Activated naive CD4-positive, alpha-beta T cell treated with anti-CD3 and anti-CD28 coated beads, Interleukin-2, amount 10 ng/mL, durations not matched to agents 7 days and 5 days (primary cell): ENCODE measurements at regions of chr9 and their contacts with region 1.

Region 1: GRCh38 chr9:32378993-32379729 is 5.3 kb upstream of the ACO1 start:
- DNase-seq: peak; percentile 66
- H3K4me3 Mint-ChIP-seq: no peak overlapping the region
- H3K27ac Mint-ChIP-seq: no peak overlapping the region
- H3K4me1 Mint-ChIP-seq: peaks cover 16% of the 10 kb centered on the region
- H3K27me3 Mint-ChIP-seq: peaks cover 41% of the 10 kb centered on the region

Region 2: DNA sequence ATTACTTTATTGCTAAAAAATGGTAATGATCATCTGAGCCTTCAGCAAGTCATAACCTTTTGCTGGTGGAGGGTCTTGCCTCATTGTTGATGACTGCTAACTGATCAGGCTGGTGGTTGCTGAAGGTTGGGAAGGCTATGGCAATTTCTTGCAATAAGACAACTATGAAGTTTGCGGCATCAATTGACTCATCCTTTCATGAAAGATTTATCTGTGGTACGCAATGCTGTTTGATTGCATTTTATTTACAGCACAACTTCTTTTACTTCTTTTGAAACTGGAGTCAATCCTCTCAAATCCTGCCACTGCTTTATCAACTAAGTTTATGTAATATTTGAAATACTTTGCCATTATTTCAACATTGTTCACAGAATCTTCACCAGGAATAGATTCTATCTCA is 53.0 kb before region 1 on chr9:
- CTCF ChIA-PET with region 1: no interaction called
- DNase-seq: no peak
- H3K4me3 Mint-ChIP-seq: no peak overlapping the region
- H3K27ac Mint-ChIP-seq: no peak overlapping the region
- H3K4me1 Mint-ChIP-seq: no peaks in the 10 kb centered on the region
- H3K27me3 Mint-ChIP-seq: no peaks in the 10 kb centered on the region

Region 3: DNA sequence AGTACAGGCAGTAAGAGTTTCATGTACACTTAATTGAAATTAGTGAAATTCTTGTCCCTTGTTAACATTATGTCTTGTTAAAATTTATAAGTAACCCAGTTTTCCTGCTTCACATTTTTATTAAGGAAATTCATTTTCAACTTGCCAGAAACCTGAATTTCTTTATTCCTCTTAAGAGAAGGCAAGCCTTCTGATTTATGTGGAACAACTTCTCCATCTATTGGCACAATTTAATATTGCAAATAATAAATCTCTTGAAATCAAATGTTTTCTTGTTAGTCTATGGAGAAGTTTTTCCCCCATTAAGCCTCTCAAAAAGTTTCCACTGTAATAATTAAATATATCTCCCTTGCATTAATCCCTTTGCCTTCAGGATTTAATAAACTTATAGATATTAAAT is 28.5 kb before region 1 on chr9:
- CTCF ChIA-PET with region 1: no interaction called
- DNase-seq: no peak
- H3K4me3 Mint-ChIP-seq: no peak overlapping the region
- H3K27ac Mint-ChIP-seq: no peak overlapping the region
- H3K4me1 Mint-ChIP-seq: no peaks in the 10 kb centered on the region
- H3K27me3 Mint-ChIP-seq: no peaks in the 10 kb centered on the region

Region 4: DNA sequence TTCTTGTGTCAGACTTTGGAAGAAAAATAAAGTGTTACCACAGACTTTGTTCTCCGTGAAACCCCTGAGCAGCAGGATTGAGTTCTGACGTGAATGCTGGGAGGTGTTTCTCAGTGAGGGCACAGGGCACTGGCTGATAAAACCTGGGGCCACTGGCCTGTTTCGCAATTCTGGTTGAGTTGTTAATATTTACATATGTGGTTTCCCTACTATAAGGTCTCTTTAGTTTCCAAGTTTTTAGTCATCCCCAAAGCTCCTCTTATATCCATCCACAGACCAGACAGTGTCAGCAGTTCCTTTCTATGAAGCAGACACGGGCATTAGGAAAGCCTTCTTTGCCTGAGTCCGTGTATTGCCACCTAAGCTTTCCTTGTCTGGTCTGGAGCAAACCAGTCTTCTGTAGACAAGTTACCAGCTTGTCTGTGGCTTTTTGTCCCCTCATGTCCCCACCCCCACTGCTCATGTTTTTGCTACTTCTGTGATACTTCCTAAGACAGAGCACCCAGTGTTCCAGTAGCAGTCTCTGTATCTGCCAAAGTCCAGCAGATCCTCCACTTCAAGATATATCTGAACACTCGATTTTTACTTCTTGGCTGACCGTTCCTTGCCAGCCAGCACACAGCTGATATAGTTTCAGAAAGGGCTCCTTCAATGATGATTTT is 47.2 kb after region 1 on chr9:
- CTCF ChIA-PET with region 1: interaction called, 41 read pairs
- DNase-seq: no peak
- H3K4me3 Mint-ChIP-seq: no peak overlapping the region
- H3K27ac Mint-ChIP-seq: no peak overlapping the region
- H3K4me1 Mint-ChIP-seq: peaks cover 5% of the 10 kb centered on the region
- H3K27me3 Mint-ChIP-seq: no peaks in the 10 kb centered on the region

Region 5: DNA sequence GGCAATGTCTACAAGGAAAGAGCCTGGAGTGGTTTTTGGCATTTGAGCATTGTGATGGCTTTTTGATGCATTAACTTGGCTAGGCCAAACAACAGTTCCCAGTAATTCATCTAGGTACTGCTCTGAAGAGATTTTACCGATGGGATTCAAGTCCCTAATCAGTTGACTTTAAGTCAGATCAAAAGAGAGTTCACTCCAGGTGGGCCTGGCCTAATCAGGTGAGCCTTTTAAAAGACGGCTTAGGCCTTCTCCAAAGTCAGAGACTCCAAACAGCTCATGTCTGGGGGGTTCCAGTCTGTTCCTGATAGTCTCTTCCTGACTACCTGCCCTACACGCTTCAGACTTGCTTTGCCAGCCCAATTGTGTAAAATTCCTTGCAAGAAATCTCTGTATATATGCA is 93.2 kb after region 1 on chr9:
- CTCF ChIA-PET with region 1: no interaction called
- DNase-seq: no peak
- H3K4me3 Mint-ChIP-seq: no peak overlapping the region
- H3K27ac Mint-ChIP-seq: no peak overlapping the region
- H3K4me1 Mint-ChIP-seq: no peaks in the 10 kb centered on the region
- H3K27me3 Mint-ChIP-seq: no peaks in the 10 kb centered on the region

Region 6: DNA sequence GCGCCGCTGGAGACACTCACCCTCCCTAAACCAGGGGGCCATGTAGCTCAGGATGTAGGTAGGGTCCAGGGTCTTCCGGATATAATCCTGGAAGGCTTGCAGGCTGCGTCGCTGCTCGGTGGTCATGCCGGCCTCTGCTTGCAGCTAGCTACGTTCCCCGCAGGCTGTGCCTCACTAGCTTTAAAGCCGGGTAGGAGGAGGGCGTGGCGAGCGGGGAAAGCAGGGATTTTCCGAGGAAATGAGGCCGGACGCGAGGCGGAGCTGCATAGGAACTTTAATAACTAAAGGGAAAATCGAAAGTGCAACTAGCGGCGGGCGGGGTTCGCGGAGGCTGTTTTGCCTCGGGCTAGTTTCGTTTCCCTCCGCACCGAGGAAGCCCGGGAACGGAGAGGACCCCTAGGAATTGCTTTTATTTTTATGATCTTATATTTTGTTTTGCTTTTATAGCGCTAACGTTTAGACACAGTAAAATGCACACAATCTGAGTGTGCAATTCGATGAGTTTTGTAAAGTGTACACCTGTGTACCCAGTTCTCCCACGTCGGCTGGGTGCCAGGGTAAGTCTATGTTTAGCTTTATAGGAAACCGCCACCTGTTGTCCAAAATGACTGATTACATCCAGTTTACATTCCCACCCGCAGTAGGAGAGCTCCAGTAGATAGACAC is 147.0 kb after region 1 on chr9 and contains the start of gene RIGI:
- CTCF ChIA-PET with region 1: interaction called, 25 read pairs
- DNase-seq: peak; percentile 90
- H3K4me3 Mint-ChIP-seq: peak within 1 kb of the TSS; percentile 91
- H3K27ac Mint-ChIP-seq: peak within 1 kb of the TSS; percentile 94
- H3K4me1 Mint-ChIP-seq: peaks cover 48% of the 10 kb centered on the region
- H3K27me3 Mint-ChIP-seq: no peaks in the 10 kb centered on the region

Region 7: DNA sequence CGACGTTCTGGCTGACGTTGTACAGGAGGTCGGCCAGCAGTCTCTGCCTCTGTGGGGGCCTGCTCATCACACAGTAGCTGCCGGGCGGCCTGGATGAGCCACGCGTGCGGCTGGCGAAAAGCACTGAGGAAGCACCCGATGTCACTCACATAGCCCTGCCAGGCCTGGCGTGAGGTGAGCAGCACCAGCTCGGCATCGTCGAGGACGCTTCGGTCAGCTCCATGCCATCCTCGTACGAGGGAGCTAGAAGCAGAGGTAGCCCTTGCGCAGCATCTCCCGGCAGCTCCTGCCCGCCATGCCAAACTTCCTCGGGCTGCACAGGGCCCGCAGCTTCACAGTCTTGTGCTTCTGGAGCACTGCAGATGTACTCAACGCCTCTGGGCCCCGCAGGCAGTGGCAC is 187.6 kb after region 1 on chr9:
- CTCF ChIA-PET with region 1: interaction called, 421 read pairs
- DNase-seq: no peak
- H3K4me3 Mint-ChIP-seq: no peak overlapping the region
- H3K27ac Mint-ChIP-seq: no peak overlapping the region
- H3K4me1 Mint-ChIP-seq: peaks cover 18% of the 10 kb centered on the region
- H3K27me3 Mint-ChIP-seq: no peaks in the 10 kb centered on the region

Region 8: DNA sequence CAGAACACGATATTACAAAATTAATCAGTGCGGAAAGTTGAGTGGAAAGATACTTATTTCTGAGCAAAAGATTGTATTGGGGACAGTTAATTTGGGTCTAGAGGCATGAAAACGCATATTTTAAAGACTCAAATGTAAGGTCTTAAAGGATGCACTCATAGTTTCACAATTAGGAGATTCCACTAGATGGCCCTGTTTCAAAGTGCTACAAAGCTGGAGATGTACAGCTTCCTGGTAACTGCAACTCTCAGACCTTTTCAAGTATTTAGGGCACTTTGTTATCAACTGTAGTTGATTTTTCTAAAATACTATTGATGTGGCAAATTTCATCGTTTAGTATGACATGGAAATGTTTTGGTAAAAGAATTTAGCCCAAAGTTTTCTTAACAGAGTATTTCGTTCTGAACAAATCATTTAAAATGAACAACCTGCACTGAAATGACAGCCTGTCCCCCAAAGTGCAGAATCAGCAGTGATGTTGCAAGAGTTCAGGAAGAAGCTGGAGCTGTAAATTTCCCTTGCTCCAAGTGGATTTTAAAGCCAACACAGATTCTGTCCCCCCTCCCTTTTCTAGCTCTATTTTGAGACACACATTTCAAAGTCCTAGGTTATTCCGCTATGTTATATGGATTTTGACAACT is 210.0 kb after region 1 on chr9:
- CTCF ChIA-PET with region 1: interaction called, 421 read pairs
- DNase-seq: no peak
- H3K4me3 Mint-ChIP-seq: no peak overlapping the region
- H3K27ac Mint-ChIP-seq: no peak overlapping the region
- H3K4me1 Mint-ChIP-seq: no peaks in the 10 kb centered on the region
- H3K27me3 Mint-ChIP-seq: peaks cover 12% of the 10 kb centered on the region